HepG2 (cell line): ENCODE measurements at regions of chrX and their contacts with region 1.

Region 1: GRCh38 chrX:83759872-83760271 is 101.1 kb upstream of the CYLC1 start:
- DNase-seq: peak; percentile 6
- ATAC-seq: no peak
- H3K4me3 ChIP-seq: no peak overlapping the region
- H3K27ac ChIP-seq: no peak overlapping the region
- H3K4me1 ChIP-seq: no peaks in the 10 kb centered on the region
- H3K27me3 ChIP-seq: no peaks in the 10 kb centered on the region
- CTCF ChIP-seq: peak; percentile 32
- EP300 ChIP-seq: no peak
- POLR2A ChIP-seq: no peak
- RAD21 ChIP-seq: no peak

Region 2: GRCh38 chrX:82115728-82116127 is 1644.1 kb before region 1 on chrX:
- CTCF ChIA-PET with region 1: no interaction called
- POLR2A ChIA-PET with region 1: no interaction called
- in situ Hi-C with region 1: no loop called
- intact Hi-C with region 1: no loop called
- DNase-seq: no peak
- ATAC-seq: no peak
- H3K4me3 ChIP-seq: no peak overlapping the region
- H3K27ac ChIP-seq: no peak overlapping the region
- H3K4me1 ChIP-seq: no peaks in the 10 kb centered on the region
- H3K27me3 ChIP-seq: no peaks in the 10 kb centered on the region
- CTCF ChIP-seq: no peak
- EP300 ChIP-seq: no peak
- POLR2A ChIP-seq: no peak
- RAD21 ChIP-seq: no peak

Region 3: GRCh38 chrX:83469551-83469950 is 290.3 kb before region 1 on chrX:
- CTCF ChIA-PET with region 1: no interaction called
- POLR2A ChIA-PET with region 1: no interaction called
- in situ Hi-C with region 1: no loop called
- intact Hi-C with region 1: loop called (anchors 2 kb)
- DNase-seq: peak; percentile 6
- ATAC-seq: peak; percentile 68
- H3K4me3 ChIP-seq: no peak overlapping the region
- H3K27ac ChIP-seq: no peak overlapping the region
- H3K4me1 ChIP-seq: no peaks in the 10 kb centered on the region
- H3K27me3 ChIP-seq: no peaks in the 10 kb centered on the region
- CTCF ChIP-seq: peak; percentile 58
- EP300 ChIP-seq: no peak
- POLR2A ChIP-seq: no peak
- RAD21 ChIP-seq: no peak